Activated CD4-positive, alpha-beta T cell treated with anti-CD3 and anti-CD28 coated beads, Interleukin-2, amount 10 ng/mL, durations not matched to agents 7 days and 5 days (primary cell): ENCODE measurements at regions of chr17 and their contacts with region 1.

Region 1: GRCh38 chr17:49840066-49840465 is 7.8 kb downstream of the TAC4 start:
- DNase-seq: no peak
- H3K4me3 Mint-ChIP-seq: no peak overlapping the region
- H3K27ac Mint-ChIP-seq: no peak overlapping the region
- H3K4me1 Mint-ChIP-seq: peaks cover 16% of the 10 kb centered on the region
- H3K27me3 Mint-ChIP-seq: no peaks in the 10 kb centered on the region

Region 2: DNA sequence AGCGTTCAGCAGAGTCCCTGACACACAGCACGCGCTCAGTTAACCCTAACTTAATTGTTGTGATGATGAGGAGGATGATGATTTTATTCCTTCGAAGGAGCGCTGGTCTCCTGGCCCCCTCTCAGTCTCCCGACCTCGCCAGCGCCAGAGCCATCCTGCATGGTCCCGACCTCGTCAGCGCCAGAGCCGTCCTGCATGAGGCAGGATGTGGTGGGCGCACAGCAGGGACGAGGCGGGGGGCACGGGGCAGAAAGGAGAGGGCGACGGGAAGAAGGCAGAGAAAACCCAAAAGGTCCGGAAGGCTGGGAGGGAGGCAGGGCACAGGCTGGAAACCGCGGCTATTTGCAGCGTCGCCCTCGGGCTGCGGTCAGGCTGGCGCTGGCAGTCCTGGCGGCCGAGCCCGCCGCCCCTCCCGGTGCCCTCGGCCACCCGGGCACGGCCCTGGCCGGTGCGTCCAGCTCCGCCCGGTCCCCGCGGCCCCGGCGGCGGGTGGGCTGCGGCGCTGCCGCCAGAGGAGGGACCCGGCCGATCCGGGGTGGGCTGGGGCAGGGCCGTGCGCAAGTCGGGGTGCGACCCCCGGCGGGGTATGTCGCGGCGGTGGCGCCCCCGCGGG is 10.8 kb after region 1 on chr17:
- CTCF ChIA-PET with region 1: interaction called, 12 read pairs
- POLR2A ChIA-PET with region 1: no interaction called
- DNase-seq: no peak
- H3K4me3 Mint-ChIP-seq: peak overlapping the region; percentile 88
- H3K27ac Mint-ChIP-seq: peak overlapping the region; percentile 93
- H3K4me1 Mint-ChIP-seq: peaks cover 21% of the 10 kb centered on the region
- H3K27me3 Mint-ChIP-seq: peaks cover 9% of the 10 kb centered on the region